Activated naive CD4-positive, alpha-beta T cell treated with anti-CD3 and anti-CD28 coated beads for 36 hours (primary cell): ENCODE measurements at regions of chr20 and their contacts with region 1.

Region 1: DNA sequence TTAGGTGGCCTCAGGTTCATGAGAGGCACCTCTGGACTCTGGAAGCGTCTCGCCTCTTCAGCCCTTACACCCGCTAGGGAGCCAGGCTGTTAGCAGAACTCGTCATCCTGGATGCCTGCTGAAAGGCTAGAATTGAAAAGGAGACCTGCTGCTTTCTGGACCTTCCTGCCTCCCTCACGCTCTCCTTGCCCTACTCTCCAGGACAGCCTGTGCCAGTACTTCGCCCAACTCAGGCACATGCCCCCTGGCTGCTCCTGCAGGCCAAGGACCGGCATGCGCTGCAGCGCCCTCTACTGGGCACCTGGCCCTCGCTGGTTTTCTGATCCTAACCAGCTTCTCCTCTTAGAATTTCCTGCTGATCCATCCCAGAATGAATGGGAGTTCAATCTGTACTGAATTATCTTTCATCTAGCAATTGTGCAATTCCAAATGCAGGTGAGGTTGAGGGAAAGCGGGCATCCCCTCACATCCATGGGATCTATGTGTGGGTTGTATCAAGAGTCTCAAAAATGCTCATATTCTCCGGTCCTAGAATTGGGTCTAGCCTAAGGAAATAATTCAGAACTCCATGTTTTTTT is 77.9 kb downstream of the PTPN1 start:
- DNase-seq: peak; percentile 88
- H3K4me3 Mint-ChIP-seq: no peak overlapping the region
- H3K27ac Mint-ChIP-seq: peak overlapping the region; percentile 65
- H3K4me1 Mint-ChIP-seq: no peaks in the 10 kb centered on the region
- H3K27me3 Mint-ChIP-seq: no peaks in the 10 kb centered on the region

Region 2: GRCh38 chr20:50037123-50037522 is 551.0 kb before region 1 on chr20:
- CTCF ChIA-PET with region 1: no interaction called
- intact Hi-C with region 1: no loop called
- DNase-seq: no peak
- H3K4me3 Mint-ChIP-seq: no peak overlapping the region
- H3K27ac Mint-ChIP-seq: no peak overlapping the region
- H3K4me1 Mint-ChIP-seq: no peaks in the 10 kb centered on the region
- H3K27me3 Mint-ChIP-seq: no peaks in the 10 kb centered on the region

Region 3: GRCh38 chr20:50366270-50367103 is 221.6 kb before region 1 on chr20:
- CTCF ChIA-PET with region 1: no interaction called
- intact Hi-C with region 1: no loop called
- DNase-seq: peak; percentile 51
- H3K4me3 Mint-ChIP-seq: no peak overlapping the region
- H3K27ac Mint-ChIP-seq: no peak overlapping the region
- H3K4me1 Mint-ChIP-seq: peaks cover 5% of the 10 kb centered on the region
- H3K27me3 Mint-ChIP-seq: peaks cover 2% of the 10 kb centered on the region

Region 4: GRCh38 chr20:50395258-50395729 is 192.8 kb before region 1 on chr20:
- CTCF ChIA-PET with region 1: no interaction called
- intact Hi-C with region 1: no loop called
- DNase-seq: no peak
- H3K4me3 Mint-ChIP-seq: no peak overlapping the region
- H3K27ac Mint-ChIP-seq: no peak overlapping the region
- H3K4me1 Mint-ChIP-seq: peaks cover 3% of the 10 kb centered on the region
- H3K27me3 Mint-ChIP-seq: no peaks in the 10 kb centered on the region

Region 5: GRCh38 chr20:50478162-50479036 is 109.7 kb before region 1 on chr20:
- CTCF ChIA-PET with region 1: interaction called, 7 read pairs
- intact Hi-C with region 1: loop called (anchors 1 kb)
- DNase-seq: peak; percentile 89
- H3K4me3 Mint-ChIP-seq: no peak overlapping the region
- H3K27ac Mint-ChIP-seq: no peak overlapping the region
- H3K4me1 Mint-ChIP-seq: peaks cover 26% of the 10 kb centered on the region
- H3K27me3 Mint-ChIP-seq: no peaks in the 10 kb centered on the region

Region 6: GRCh38 chr20:50605136-50605535 is 17.0 kb after region 1 on chr20:
- CTCF ChIA-PET with region 1: interaction called, 10 read pairs
- intact Hi-C with region 1: no loop called
- DNase-seq: no peak
- H3K4me3 Mint-ChIP-seq: no peak overlapping the region
- H3K27ac Mint-ChIP-seq: no peak overlapping the region
- H3K4me1 Mint-ChIP-seq: no peaks in the 10 kb centered on the region
- H3K27me3 Mint-ChIP-seq: no peaks in the 10 kb centered on the region

Region 7: GRCh38 chr20:50691573-50692551 is 103.7 kb after region 1 on chr20:
- CTCF ChIA-PET with region 1: interaction called, 11 read pairs
- intact Hi-C with region 1: no loop called
- DNase-seq: no peak
- H3K4me3 Mint-ChIP-seq: peak overlapping the region; percentile 0
- H3K27ac Mint-ChIP-seq: no peak overlapping the region
- H3K4me1 Mint-ChIP-seq: peaks cover 18% of the 10 kb centered on the region
- H3K27me3 Mint-ChIP-seq: peaks cover 48% of the 10 kb centered on the region

Region 8: DNA sequence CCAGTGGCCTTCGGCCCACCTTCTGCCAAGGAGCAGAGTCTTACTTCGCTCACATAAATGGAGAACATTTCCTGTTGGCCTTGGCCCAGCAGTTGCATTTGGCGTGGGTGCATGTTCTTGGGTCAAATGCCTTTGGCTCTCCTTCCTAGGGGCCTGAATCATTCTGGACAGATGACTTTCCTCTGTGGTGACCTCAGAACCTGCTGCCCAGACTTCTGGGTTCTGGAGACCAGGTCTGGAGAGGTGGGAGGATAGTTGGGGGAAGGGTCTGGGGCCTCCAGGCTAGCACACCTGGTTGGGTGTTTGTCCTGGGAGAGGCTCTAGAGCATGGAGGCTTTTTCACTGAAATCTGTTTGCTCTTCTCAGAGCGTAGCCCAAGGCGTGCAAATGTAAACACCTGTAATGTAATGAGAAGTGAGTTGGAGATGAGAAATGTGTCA is 236.1 kb after region 1 on chr20:
- CTCF ChIA-PET with region 1: no interaction called
- intact Hi-C with region 1: no loop called
- DNase-seq: no peak
- H3K4me3 Mint-ChIP-seq: no peak overlapping the region
- H3K27ac Mint-ChIP-seq: no peak overlapping the region
- H3K4me1 Mint-ChIP-seq: peaks cover 4% of the 10 kb centered on the region
- H3K27me3 Mint-ChIP-seq: no peaks in the 10 kb centered on the region